ENCODE measurements at regions of chr21 and their contacts with region 1.

Region 1: GRCh38 chr21:45596704-45597318 is 46.7 kb upstream of the PCBP3 start:
- H3K4me3 ChIP-seq: no peak overlapping the region
- H3K27ac ChIP-seq: no peak overlapping the region
- H3K4me1 ChIP-seq: no peaks in the 10 kb centered on the region
- CTCF ChIP-seq: peak; percentile 95

Region 2: DNA sequence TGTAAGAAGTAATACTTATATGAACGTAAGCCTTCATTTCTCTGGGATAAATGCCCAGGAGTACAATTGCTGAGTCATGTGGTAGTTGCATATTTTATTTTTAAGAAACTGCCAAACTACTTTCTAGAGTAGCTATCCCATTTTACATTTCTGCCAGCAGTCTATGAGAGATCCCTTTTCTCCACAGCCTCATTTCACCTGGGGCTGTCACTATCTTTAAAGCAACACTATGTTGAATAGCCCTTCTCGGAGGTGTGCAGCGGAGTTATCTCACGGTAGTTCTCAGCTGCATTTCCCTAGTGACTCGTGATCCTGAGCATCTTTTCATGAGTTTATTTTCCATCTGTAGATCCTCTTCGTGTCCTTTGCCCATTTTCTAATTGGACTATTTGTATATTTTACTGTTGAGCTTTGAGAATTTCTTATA is 429.0 kb before region 1 on chr21:
- CTCF ChIA-PET with region 1: no interaction called
- POLR2A ChIA-PET with region 1: no interaction called
- H3K4me3 ChIP-seq: no peak overlapping the region
- H3K27ac ChIP-seq: no peak overlapping the region
- H3K4me1 ChIP-seq: peaks cover 2% of the 10 kb centered on the region; the same call in 1 of the 2 replicates
- CTCF ChIP-seq: no peak

Region 3: GRCh38 chr21:45542242-45542666 is 54.6 kb before region 1 on chr21 and contains the start of gene SLC19A1:
- CTCF ChIA-PET with region 1: no interaction called
- POLR2A ChIA-PET with region 1: no interaction called
- H3K4me3 ChIP-seq: peak within 1 kb of the TSS; percentile 60
- H3K27ac ChIP-seq: peak within 1 kb of the TSS; percentile 43; the same call in 1 of the 2 replicates
- H3K4me1 ChIP-seq: 0 out of 2 replicates have a peak, but pooled peaks cover 2% of the 10 kb centered on the region
- CTCF ChIP-seq: no peak

Region 4: DNA sequence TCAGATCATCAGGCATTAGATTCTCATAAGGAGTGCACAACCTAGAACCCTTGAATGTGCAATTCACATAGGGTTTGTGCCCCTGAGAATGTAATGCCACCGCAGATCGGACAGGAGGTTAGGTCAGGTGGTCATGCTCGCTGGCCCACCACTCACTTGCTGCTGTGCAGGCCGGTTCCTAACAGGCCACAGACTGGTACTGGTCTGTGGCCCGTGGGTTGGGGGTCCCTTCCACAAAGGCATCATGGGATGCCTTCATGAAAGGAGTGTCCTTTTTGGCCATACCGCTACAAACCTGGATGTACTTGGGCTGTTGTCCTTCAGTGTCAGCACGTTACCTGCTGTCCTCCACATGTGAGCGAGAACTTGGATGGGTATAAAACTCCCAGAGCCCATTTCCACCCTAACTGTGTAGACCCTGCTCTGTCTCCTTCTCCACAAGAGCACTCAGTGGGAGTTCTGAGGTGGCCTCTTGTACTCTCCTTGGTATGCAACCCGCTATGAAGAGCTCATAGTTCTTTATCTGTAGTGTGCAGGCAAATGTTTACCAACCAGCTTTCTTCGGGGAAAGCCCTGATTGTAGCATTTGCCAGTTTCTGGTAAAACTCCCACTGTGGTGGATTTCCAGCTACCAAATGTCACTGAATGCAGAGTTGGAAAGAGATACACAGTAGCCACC is 12.8 kb before region 1 on chr21:
- CTCF ChIA-PET with region 1: interaction called, 15 read pairs
- POLR2A ChIA-PET with region 1: no interaction called
- H3K4me3 ChIP-seq: no peak overlapping the region
- H3K27ac ChIP-seq: no peak overlapping the region
- H3K4me1 ChIP-seq: no peaks in the 10 kb centered on the region
- CTCF ChIP-seq: no peak

Measured in HEK293 (cell line).